ENCODE measurements at regions of chr1 and their contacts with region 1.

Region 1: GRCh38 chr1:220873868-220874655 is 5.2 kb upstream of the HLX start:
- DNase-seq: no peak
- H3K4me3 ChIP-seq: no peak overlapping the region
- H3K27me3 ChIP-seq: no peaks in the 10 kb centered on the region
- CTCF ChIP-seq: peak; percentile 71

Region 2: GRCh38 chr1:221097479-221098383 is 223.7 kb after region 1 on chr1:
- CTCF ChIA-PET with region 1: interaction called, 10 read pairs
- POLR2A ChIA-PET with region 1: no interaction called
- DNase-seq: peak; percentile 98
- H3K4me3 ChIP-seq: no peak overlapping the region
- H3K27me3 ChIP-seq: no peaks in the 10 kb centered on the region
- CTCF ChIP-seq: no peak

Region 3: DNA sequence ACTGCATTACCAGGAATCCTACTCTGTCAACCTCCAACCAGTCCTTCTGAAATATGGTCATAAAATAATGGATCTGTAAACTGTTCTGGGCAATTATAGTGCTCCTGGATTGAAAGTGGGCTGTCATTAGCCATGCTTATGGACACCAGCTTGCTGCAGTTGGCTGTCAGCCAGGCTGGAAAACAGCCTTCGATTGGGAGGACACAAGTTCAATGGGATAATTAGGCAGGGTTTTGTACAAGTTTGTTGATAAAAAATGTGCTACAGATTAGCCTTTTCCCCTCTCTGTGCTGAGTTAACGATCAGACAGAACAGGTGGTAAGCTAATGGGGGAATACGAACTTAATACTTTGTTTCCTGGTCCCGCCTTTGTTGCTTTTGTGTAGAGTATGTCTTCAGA is 453.9 kb after region 1 on chr1:
- CTCF ChIA-PET with region 1: no interaction called
- POLR2A ChIA-PET with region 1: no interaction called
- DNase-seq: no peak
- H3K4me3 ChIP-seq: no peak overlapping the region
- H3K27me3 ChIP-seq: no peaks in the 10 kb centered on the region; the same call in 1 of the 2 replicates
- CTCF ChIP-seq: no peak

Measured in BJ (cell line).